GM23248 (cell line): ENCODE measurements at regions of chr9 and their contacts with region 1.

Region 1: DNA sequence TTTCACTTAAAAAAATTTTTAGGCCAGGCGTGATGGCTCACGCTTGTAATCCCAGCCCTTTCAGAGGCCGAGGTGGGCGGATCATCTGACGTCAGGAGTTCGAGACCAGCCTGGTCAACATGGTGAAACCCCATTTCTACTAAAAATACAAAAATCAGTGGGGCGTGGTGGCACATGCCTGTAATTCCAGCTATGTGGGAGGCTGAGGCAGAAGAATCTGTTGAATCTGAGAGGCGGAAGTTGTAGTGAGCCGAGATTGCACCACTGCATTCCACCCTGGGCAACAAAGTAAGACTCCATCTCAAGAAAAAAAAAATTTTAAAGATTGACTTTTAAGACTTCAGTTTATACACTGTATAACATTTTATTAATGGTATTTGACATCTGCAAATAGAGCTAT is 60.1 kb upstream of the GNAQ start:
- DNase-seq: no peak
- H3K4me3 ChIP-seq: no peak overlapping the region
- H3K27ac ChIP-seq: no peak overlapping the region
- H3K4me1 ChIP-seq: no peaks in the 10 kb centered on the region
- H3K27me3 ChIP-seq: peaks cover 7% of the 10 kb centered on the region; the same call in 1 of the 2 replicates

Region 2: DNA sequence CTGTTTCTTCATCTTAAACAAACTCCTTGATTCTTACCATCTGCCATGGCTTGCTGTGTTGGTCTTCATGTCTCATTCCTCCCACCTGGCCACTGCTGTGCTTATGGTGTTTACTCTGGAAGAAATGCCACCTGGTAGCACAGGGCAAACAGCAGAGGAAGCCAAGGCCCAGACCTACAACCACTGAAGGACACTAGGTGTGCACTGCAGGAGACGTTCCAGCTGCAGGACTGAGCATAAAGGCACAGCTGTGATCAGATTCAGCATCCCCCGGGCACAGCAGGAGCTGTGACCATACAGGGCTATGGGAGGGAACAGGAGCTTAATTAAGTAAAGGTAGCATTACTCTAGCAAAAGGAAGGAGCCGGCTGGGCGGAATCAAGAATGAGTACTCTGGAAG is 47.5 kb before region 1 on chr9:
- in situ Hi-C with region 1: loop called (anchors 5 kb)
- DNase-seq: no peak
- H3K4me3 ChIP-seq: no peak overlapping the region
- H3K27ac ChIP-seq: no peak overlapping the region
- H3K4me1 ChIP-seq: no peaks in the 10 kb centered on the region
- H3K27me3 ChIP-seq: 0 out of 2 replicates have a peak, but pooled peaks cover 13% of the 10 kb centered on the region